HEK293 (cell line): ENCODE measurements at regions of chr9 and their contacts with region 1.

Region 1: DNA sequence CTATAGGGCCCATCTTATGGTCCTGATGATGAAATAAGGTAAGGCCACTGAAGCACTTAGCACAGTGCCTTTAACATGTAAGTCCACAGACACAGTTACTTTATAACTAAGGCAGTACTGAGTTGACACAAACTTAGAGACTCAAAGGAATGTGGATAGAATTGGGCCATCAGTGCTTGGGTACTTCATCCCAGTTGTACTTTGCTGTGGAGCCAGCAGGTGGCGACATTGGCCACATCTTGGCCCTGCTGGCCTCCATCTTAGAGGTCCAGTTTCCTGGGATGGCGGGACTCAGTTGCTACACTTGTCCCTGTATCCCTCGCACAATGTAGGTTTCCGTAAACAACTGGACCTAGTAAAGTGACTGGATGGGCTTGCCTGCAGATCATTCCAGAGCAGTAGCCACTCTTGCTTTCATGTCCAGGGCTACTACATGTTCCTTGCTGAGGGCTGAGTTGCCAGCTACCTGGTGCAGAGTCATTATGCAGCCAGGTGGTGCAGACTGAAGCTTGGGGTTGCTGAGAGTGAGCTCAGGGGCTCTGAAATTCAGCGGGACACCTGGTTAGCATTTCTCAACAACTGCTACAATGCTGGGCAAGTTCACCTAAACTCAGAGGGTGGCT is 10.6 kb downstream of the MTAP start:
- H3K4me3 ChIP-seq: no peak overlapping the region
- H3K27ac ChIP-seq: no peak overlapping the region; the same call in 1 of the 2 replicates
- H3K4me1 ChIP-seq: no peaks in the 10 kb centered on the region
- CTCF ChIP-seq: peak; percentile 71; the same call in 1 of the 2 replicates

Region 2: DNA sequence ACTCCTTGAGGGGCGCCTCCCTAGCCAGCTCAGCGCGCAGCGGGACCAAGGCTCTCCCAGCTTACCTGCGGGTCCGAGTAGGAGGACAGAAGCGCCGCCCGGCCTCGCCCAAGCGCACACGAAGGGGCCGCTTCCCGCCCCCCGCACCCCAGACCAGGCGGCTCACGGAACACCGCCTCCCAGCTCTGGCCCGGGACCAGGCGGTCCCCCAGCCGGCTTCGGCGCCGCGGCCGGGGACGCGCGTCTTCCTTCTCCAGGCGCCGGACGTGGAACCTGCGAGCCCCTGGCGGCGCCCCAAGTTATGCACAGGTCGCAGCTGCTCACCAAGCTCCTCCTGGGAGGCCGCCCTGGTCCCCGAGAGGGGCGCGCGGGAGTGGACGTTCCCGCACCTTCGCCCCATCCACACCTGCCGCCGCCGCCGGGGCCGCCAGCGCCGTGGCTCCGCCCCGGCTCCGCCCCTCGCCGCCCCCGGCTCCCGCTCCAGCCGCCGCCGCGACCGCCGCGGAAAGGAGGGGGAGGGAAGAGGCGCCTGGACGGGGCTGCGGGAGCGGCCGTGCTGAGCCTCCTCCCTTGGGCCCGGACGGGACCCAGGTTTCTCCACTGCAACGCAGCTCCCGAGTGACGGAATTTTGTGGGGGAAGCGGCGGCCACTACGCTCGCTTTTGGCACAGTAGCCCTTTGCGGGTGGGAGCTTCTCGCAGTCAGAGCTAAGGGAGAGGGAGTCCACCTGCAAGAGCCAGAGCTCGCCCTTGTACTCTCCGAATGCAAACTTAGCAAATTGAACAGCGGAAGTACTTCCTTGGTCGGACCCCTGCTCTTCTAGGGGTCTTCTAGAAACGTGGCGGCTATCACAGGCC is 253.4 kb before region 1 on chr9:
- CTCF ChIA-PET with region 1: no interaction called
- POLR2A ChIA-PET with region 1: no interaction called
- H3K4me3 ChIP-seq: peak overlapping the region; percentile 98
- H3K27ac ChIP-seq: peak overlapping the region; percentile 91
- H3K4me1 ChIP-seq: peaks cover 12% of the 10 kb centered on the region; the same call in 1 of the 2 replicates
- CTCF ChIP-seq: peak; percentile 36; the same call in 1 of the 2 replicates

Region 3: DNA sequence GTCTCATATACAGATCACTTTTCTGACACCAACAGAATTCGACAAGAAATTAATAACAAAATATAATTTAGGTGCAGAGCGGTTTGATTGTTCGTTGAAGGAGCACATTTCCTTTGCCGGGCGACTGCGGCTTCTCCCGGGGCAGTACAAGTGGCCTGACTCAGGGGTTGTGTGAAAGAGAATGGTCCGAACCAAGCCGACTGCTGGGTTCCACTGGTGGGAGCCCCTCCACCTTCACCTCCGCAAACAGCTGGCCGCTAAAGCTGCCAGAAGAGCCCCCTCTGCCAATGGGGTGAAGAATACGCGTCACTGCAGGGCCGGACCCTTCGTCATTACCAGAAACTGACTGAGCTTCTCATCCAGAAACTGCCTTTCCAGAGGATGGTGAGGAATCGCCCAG is 175.0 kb before region 1 on chr9:
- CTCF ChIA-PET with region 1: no interaction called
- POLR2A ChIA-PET with region 1: no interaction called
- H3K4me3 ChIP-seq: no peak overlapping the region
- H3K27ac ChIP-seq: no peak overlapping the region
- H3K4me1 ChIP-seq: no peaks in the 10 kb centered on the region
- CTCF ChIP-seq: no peak

Region 4: GRCh38 chr9:21761309-21761901 is 51.7 kb before region 1 on chr9:
- CTCF ChIA-PET with region 1: no interaction called
- POLR2A ChIA-PET with region 1: no interaction called
- H3K4me3 ChIP-seq: no peak overlapping the region
- H3K27ac ChIP-seq: no peak overlapping the region
- H3K4me1 ChIP-seq: no peaks in the 10 kb centered on the region
- CTCF ChIP-seq: no peak

Region 5: GRCh38 chr9:21802195-21803000 is 10.7 kb before region 1 on chr9 and contains the start of gene MTAP:
- CTCF ChIA-PET with region 1: interaction called, 13 read pairs
- POLR2A ChIA-PET with region 1: interaction called, 4 read pairs
- H3K4me3 ChIP-seq: peak within 1 kb of the TSS; percentile 82
- H3K27ac ChIP-seq: peak within 1 kb of the TSS; percentile 80
- H3K4me1 ChIP-seq: peaks cover 2% of the 10 kb centered on the region; the same call in 1 of the 2 replicates
- CTCF ChIP-seq: no peak

Region 6: DNA sequence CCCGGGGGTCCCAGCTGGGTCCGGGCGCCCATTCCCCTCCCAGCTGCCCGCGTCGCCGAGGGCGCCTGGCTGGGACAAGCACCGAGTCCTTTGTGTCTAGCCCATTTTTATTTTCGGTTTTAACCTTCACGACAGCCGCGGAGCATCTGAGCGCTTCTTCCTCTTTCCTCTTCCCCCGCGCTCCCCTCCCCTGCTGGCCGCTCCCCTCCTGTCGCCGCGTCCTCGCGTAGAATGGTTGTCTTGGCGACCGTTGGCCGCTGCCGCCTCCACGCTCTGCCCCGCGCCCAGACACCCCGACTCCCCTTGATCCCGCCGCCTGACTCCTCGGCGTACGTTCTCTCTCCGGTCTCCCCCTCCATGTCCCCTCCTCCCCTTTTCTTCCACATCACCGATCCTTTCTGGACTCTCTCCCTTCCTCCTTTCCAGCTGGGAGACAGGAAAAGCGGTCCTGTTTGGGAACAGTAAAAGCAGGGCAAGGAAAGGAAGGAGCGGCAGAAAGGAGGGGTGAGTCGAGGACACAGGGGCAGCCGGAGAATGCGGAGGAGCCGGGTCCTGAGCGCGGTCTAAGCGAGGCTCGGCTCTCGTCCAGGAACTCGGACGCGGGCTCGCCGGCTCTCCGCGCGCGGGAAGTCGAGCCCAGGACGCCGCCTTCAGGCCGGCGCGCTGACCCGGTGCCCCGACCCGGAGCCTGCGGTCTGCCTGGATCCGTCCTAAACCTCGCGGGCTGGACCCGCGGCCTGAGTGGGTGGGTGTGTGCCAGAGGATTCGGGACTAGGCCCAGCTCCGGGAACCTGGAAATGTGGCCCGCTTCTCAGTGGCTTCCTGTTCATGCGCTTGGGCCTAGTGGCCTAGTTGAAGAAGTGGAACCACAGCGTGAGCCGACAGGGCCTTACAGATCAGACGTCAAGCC is 182.4 kb after region 1 on chr9:
- CTCF ChIA-PET with region 1: interaction called, 30 read pairs
- POLR2A ChIA-PET with region 1: no interaction called
- H3K4me3 ChIP-seq: peak overlapping the region; percentile 59
- H3K27ac ChIP-seq: peak overlapping the region; percentile 99
- H3K4me1 ChIP-seq: peaks cover 5% of the 10 kb centered on the region; the same call in 1 of the 2 replicates
- CTCF ChIP-seq: no peak

Region 7: DNA sequence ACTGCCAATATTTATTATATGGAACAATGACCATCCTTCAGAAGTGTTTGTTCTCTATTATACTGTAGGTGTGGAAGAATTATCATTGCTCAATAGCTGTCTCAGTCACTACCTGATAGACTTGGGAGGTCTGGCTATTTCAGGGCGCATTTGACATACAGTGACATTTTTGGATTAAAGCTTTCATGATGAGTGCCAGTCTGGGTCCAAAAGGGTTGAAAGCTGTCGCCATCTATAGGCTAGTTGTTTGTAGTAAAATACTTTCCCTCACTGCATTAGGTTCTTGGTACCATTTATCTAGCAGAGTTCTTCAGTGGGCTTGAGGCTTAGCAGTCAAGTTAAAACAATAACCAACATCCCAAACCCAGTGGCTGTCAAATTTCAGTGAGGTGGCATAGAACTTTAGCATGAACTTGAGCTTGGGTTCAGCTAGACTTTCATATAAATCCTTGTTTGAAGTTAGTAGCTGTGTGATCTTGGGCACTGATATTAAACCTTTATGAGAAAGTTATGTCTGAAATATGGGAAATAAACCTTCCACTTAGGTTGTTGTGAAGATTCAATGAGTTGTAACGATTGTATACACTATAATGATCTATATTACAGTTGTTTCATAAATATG is 306.6 kb after region 1 on chr9:
- CTCF ChIA-PET with region 1: interaction called, 12 read pairs
- POLR2A ChIA-PET with region 1: no interaction called
- H3K4me3 ChIP-seq: no peak overlapping the region
- H3K27ac ChIP-seq: no peak overlapping the region
- H3K4me1 ChIP-seq: peaks cover 14% of the 10 kb centered on the region; the same call in 1 of the 2 replicates
- CTCF ChIP-seq: no peak

Region 8: DNA sequence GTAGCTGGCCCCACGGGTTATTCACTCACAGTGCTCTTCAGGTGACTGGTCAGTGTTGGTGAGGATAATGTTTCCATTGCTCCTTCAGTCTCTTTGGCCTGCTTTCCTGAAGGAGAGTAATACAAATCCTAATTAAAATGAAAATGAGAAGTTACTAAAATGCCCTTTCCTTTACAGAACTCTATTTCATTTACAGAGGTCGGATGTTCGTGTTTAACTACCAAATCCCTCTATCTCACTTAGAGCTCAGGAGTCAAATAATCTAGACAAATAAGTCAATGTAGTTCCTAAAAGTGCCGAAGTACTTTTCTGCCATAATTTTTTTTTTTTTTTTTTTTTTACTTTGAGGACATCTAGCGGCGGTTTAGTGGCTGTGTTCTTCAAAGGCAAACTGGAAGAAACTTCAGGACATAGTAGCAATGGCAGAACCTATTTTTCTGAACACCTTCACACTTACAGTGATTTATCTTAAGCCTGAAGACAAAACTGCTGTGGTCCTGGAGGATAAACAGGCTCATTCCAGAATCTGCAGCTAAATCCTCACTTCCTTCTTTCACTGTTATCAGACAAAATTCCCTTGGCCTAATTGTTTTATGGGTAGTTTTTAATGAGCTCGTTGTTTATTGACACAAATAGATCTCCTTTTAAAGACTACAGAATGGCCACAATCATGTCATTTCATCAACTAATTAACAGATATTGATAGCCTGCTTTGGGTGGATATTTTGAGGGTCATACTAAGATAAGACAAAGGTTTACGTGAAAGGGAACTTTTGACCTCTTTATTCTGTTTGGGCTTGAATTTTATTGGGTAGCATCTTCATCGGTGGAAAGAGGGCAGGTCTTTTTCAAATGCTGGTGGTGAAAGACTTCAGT is 426.0 kb after region 1 on chr9:
- CTCF ChIA-PET with region 1: interaction called, 80 read pairs
- POLR2A ChIA-PET with region 1: interaction called, 3 read pairs
- H3K4me3 ChIP-seq: peak overlapping the region; percentile 9; the same call in 1 of the 2 replicates
- H3K27ac ChIP-seq: peak overlapping the region; percentile 81
- H3K4me1 ChIP-seq: peaks cover 22% of the 10 kb centered on the region
- CTCF ChIP-seq: no peak

Region 9: DNA sequence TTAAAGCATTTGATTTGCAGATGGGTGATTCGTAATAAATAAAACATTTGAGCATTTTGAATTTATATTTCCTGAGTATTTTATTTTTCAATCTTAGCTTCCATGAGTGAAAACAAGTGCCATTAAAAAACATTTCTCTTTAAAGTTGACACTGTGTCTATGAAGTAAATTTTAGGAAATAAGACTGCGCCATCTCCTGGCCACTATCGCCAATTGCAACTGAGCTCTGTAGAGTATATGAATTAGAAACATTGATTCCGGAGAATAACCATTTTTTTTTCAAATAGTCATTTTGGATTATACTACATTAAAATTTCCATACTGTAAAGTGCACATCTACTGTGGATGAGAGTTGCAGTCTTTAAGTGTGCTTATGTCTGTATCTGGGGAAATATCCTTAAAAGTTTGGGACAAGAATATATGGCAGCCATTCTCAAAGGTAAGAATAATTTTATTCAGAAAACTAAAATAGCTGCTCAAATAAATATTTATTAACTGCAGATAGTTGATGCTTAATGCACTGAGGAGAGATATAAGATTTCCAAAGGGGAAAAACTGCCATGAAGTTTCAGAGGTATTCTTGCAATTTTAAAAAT is 639.5 kb after region 1 on chr9:
- CTCF ChIA-PET with region 1: interaction called, 24 read pairs
- POLR2A ChIA-PET with region 1: no interaction called
- H3K4me3 ChIP-seq: no peak overlapping the region
- H3K27ac ChIP-seq: no peak overlapping the region
- H3K4me1 ChIP-seq: no peaks in the 10 kb centered on the region
- CTCF ChIP-seq: no peak